ENCODE measurements at regions of chr16 and their contacts with region 1.

Region 1: GRCh38 chr16:667780-668518 is at the start of gene RHOT2:
- DNase-seq: peak; percentile 65
- H3K4me3 ChIP-seq: peak within 1 kb of the TSS; percentile 62 to 89 (median 82)
- H3K27ac ChIP-seq: peak within 1 kb of the TSS; percentile 87 to 93 (median 92)
- H3K4me1 ChIP-seq: peaks cover 16 to 36% (median 16%) of the 10 kb centered on the region in 3 donors
- H3K27me3 ChIP-seq: no peaks in the 10 kb centered on the region
- CTCF ChIP-seq: peak; percentile 79 to 98 (median 97)
- POLR2A ChIP-seq: peak in 2 of 4 donors; percentile 49 to 77
- total RNA-seq, gene RHOT2: 28.4 to 70.2 (median 48.9) TPM

Region 2: GRCh38 chr16:546909-547770 is 120.8 kb before region 1 on chr16:
- intact Hi-C with region 1: no loop called
- DNase-seq: no peak
- H3K4me3 ChIP-seq: peak overlapping the region in 2 of 4 donors; percentile 26 to 29
- H3K27ac ChIP-seq: no peak overlapping the region
- H3K4me1 ChIP-seq: peaks cover 0 to 19% (median 0%) of the 10 kb centered on the region in 3 donors
- H3K27me3 ChIP-seq: no peaks in the 10 kb centered on the region
- CTCF ChIP-seq: peak in 5 of 6 experiments; percentile 43 to 66 (median 57)
- POLR2A ChIP-seq: no peak

Region 3: GRCh38 chr16:589658-590159 is 78.2 kb before region 1 on chr16 and contains the start of gene RAB40C:
- intact Hi-C with region 1: loop called (anchors 10 kb)
- DNase-seq: peak; percentile 95
- H3K4me3 ChIP-seq: peak within 1 kb of the TSS; percentile 71 to 92 (median 84)
- H3K27ac ChIP-seq: peak within 1 kb of the TSS; percentile 95 to 99 (median 98)
- H3K4me1 ChIP-seq: peaks cover 54 to 79% (median 61%) of the 10 kb centered on the region in 3 donors
- H3K27me3 ChIP-seq: peaks cover 0 to 6% (median 0%) of the 10 kb centered on the region in 4 donors
- CTCF ChIP-seq: peak in 1 of 6 experiments; percentile 15
- POLR2A ChIP-seq: no peak
- total RNA-seq, gene RAB40C: 14.2 to 31.4 (median 20.3) TPM